IMR-90 (cell line): ENCODE measurements at regions of chr1 and their contacts with region 1.

Region 1: GRCh38 chr1:230113607-230114236 is 46.7 kb downstream of the GALNT2 start:
- DNase-seq: peak; percentile 99
- ATAC-seq: peak; percentile 76
- H3K4me3 ChIP-seq: peak overlapping the region; percentile 34
- H3K27ac ChIP-seq: peak overlapping the region; percentile 75
- H3K4me1 ChIP-seq: peaks cover 25% of the 10 kb centered on the region
- H3K27me3 ChIP-seq: no peaks in the 10 kb centered on the region
- CTCF ChIP-seq: no peak
- POLR2A ChIP-seq: peak; percentile 71; the same call in 1 of the 2 replicates
- RAD21 ChIP-seq: peak; percentile 1; the same call in 1 of the 2 replicates

Region 2: DNA sequence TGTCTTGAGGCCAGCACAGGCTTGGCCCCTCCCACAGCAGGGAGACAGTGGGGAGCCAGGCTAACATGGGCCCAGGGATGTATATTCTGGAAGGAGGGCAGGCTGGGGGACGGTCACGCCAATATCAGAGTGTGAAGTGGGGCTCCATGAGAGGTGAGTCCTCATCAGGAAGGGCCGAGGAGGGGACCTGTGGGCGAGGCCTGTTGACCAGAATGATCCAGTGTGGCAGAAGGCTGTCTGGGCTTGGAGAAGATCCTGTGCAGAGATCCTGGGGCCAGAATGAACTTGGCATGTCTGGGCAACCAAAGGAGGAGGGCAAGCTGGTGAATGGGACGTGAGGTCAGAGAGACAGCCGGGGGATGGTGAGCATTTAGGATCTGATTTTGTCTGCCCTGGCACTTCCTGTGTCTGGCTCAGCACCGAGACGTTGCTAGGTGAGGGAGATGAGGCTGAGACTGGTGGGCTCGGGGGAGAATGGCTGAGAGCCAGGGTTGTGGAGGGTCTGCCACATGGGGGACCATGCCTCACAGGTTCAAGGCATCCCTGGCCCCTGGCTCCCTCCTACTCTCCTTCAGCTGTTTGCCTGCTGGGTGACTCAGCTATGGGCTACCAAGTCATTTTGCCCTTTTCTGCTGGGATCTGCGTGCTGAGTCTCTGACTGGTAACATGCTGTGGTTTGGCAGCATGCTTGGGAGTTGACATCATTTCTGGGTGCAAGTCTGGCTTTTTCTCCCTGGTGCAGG is 29.4 kb before region 1 on chr1:
- CTCF ChIA-PET with region 1: no interaction called
- POLR2A ChIA-PET with region 1: no interaction called
- dilution Hi-C with region 1: no loop called
- in situ Hi-C with region 1: no loop called
- intact Hi-C with region 1: loop called (anchors 1 kb)
- DNase-seq: peak; percentile 99
- ATAC-seq: peak; percentile 95
- H3K4me3 ChIP-seq: no peak overlapping the region
- H3K27ac ChIP-seq: peak overlapping the region; percentile 94
- H3K4me1 ChIP-seq: peaks cover 37% of the 10 kb centered on the region
- H3K27me3 ChIP-seq: no peaks in the 10 kb centered on the region
- CTCF ChIP-seq: peak; percentile 5; the same call in 1 of the 2 replicates
- POLR2A ChIP-seq: no peak; the same call in 1 of the 2 replicates
- RAD21 ChIP-seq: peak; percentile 13